ENCODE measurements at regions of chr9 and their contacts with region 1.

Region 1: GRCh38 chr9:129227631-129228189 is 49.6 kb upstream of the IER5L start:
- DNase-seq: peak in 1 of 3 donors; percentile 12
- ATAC-seq: no peak
- H3K4me3 ChIP-seq: no peak overlapping the region
- H3K27ac ChIP-seq: no peak overlapping the region
- H3K4me1 ChIP-seq: no peaks in the 10 kb centered on the region
- H3K27me3 ChIP-seq: no peaks in the 10 kb centered on the region

Region 2: DNA sequence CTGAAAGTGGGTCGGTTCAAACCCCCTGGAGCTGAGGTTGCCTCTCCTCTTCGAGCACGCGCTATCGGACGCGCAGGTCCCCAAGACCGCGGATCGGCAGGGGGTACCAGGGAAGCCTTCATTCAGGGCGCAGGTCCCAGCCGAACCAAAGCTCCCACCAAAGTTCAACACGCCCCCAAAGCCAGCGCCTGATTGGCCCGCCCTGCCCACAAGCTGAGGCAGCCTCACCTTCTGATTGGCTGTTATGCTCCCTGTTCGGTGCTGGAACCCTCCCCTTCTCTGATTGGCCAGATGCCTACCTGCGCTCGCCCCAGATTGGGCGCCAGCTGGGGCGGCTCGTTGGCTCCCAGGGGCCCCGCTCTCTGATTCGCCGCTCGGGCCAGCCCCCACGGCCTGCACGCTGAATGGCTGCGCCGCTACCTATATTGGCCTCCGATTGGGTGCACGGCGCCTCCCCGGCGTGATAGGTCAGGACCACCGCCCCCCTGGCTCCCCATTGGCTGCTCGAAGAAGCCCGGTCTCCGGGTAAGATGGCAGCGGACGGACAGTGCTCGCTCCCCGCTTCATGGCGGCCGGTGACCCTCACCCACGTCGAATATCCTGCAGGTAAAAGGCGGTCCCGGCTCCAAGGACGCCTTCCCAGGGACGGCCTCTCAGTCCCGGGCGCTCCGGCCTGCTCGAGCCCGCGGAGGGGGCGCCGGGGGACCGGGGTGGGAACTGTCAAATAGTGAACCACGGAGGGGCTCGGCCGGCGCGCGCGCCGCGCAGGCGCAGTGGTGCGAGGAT is 146.9 kb before region 1 on chr9 and contains the start of gene DOLPP1:
- intact Hi-C with region 1: no loop called
- DNase-seq: peak; percentile 100
- ATAC-seq: peak; percentile 99
- H3K4me3 ChIP-seq: peak within 1 kb of the TSS; percentile 67
- H3K27ac ChIP-seq: peak within 1 kb of the TSS; percentile 64
- H3K4me1 ChIP-seq: peaks cover 5% of the 10 kb centered on the region
- H3K27me3 ChIP-seq: no peaks in the 10 kb centered on the region
- total RNA-seq, gene DOLPP1: 6.3 to 7.3 (median 6.8) TPM

Region 3: GRCh38 chr9:129247820-129248153 is 20.1 kb after region 1 on chr9:
- intact Hi-C with region 1: loop called in 1 of 4 experiments (anchors 2 kb)
- DNase-seq: peak; percentile 4 to 28 (median 4)
- ATAC-seq: no peak
- H3K4me3 ChIP-seq: no peak overlapping the region
- H3K27ac ChIP-seq: no peak overlapping the region
- H3K4me1 ChIP-seq: no peaks in the 10 kb centered on the region
- H3K27me3 ChIP-seq: no peaks in the 10 kb centered on the region

Region 4: DNA sequence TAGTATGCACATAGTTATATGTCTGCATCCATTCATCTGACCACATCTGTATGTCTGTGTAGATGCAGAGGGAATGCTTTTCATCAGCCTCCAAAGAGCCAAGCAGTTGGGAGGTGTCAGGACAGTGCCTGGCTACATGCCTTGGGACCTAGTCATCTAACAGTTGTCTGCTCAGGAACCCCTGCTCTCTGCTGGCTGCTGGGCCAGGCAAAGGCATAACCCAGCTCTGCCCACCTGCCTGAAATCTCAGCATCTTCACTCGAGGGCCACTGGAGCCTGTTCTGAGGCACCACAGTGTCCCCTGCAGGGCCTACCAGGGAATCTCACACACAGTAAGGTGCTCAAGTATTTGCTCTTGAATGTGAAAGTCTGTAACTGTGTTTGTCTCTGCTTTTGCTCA is 389.5 kb after region 1 on chr9:
- intact Hi-C with region 1: no loop called
- DNase-seq: peak in 1 of 3 donors; percentile 20
- ATAC-seq: no peak
- H3K4me3 ChIP-seq: no peak overlapping the region
- H3K27ac ChIP-seq: no peak overlapping the region
- H3K4me1 ChIP-seq: no peaks in the 10 kb centered on the region
- H3K27me3 ChIP-seq: no peaks in the 10 kb centered on the region